ENCODE measurements at regions of chr20 and their contacts with region 1.

Region 1: DNA sequence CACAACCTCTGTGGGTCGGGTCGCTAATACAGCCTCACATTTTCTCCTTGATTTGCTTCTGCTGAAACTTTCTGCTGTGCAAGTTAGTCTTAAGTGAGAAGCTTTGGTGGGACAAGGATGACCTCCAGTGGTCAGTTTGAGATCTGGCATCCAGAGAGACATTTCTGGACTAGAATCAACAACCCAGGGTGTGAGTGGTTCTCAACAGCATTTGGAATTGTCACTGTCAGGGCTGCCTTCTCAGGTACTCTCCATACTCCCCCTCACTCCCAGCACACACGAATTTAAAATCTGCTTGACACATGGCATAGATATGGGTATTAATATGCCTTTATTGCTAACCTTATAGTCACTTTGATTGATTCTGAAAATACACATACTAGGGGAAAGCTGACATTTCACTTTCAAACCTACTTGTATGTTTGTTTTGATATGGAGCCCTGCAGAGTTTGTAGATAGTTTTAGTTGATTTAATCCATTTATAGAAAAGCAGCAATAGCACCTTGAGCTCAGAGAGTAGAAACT is 13.2 kb downstream of the OTOR start:
- DNase-seq: peak; percentile 43
- ATAC-seq: peak; percentile 91
- H3K4me3 Mint-ChIP-seq: no peak overlapping the region
- H3K27ac Mint-ChIP-seq: no peak overlapping the region
- H3K4me1 Mint-ChIP-seq: peaks cover 29% of the 10 kb centered on the region
- H3K27me3 Mint-ChIP-seq: peaks cover 6% of the 10 kb centered on the region; the same call in 1 of the 2 replicates
- CTCF ChIP-seq: peak; percentile 53; the same call in 1 of the 2 replicates

Region 2: GRCh38 chr20:16520154-16520553 is 241.2 kb before region 1 on chr20:
- CTCF ChIA-PET with region 1: interaction called, 11 read pairs
- POLR2A ChIA-PET with region 1: no interaction called
- DNase-seq: no peak
- ATAC-seq: no peak
- H3K4me3 Mint-ChIP-seq: no peak overlapping the region
- H3K27ac Mint-ChIP-seq: no peak overlapping the region
- H3K4me1 Mint-ChIP-seq: peaks cover 43% of the 10 kb centered on the region
- H3K27me3 Mint-ChIP-seq: no peaks in the 10 kb centered on the region
- CTCF ChIP-seq: no peak

Region 3: GRCh38 chr20:16671753-16672152 is 89.6 kb before region 1 on chr20:
- CTCF ChIA-PET with region 1: no interaction called
- POLR2A ChIA-PET with region 1: no interaction called
- DNase-seq: no peak
- ATAC-seq: no peak
- H3K4me3 Mint-ChIP-seq: no peak overlapping the region
- H3K27ac Mint-ChIP-seq: no peak overlapping the region
- H3K4me1 Mint-ChIP-seq: no peaks in the 10 kb centered on the region
- H3K27me3 Mint-ChIP-seq: no peaks in the 10 kb centered on the region
- CTCF ChIP-seq: no peak

Region 4: DNA sequence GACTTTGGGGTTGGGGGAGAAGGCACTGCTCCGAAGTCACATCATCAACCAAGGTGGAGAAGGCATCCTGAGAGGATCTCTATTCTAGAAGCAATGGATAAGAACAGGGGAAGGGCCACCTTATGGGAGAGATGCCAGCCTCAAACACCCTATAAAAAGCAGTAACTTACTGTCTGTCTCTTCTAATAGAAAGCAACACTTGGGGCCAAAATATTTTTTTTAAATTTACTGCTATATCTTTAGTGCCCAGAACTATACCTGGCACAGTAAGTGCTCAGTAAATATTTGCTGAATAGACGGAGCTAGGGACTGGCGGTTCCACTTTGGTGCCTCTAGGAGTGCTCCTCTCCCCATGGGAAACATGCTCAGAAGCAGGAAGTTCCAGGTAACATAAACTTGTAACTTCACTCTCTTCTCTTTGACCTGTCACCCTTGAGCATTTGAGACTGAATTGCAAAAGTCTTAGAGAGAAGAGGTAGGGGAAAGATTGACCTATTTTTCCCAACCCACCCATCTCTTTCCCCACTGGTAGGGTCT is 14.0 kb before region 1 on chr20:
- CTCF ChIA-PET with region 1: interaction called, 14 read pairs
- POLR2A ChIA-PET with region 1: interaction called, 3 read pairs
- DNase-seq: no peak
- ATAC-seq: peak; percentile 93
- H3K4me3 Mint-ChIP-seq: no peak overlapping the region
- H3K27ac Mint-ChIP-seq: no peak overlapping the region
- H3K4me1 Mint-ChIP-seq: peaks cover 21% of the 10 kb centered on the region
- H3K27me3 Mint-ChIP-seq: no peaks in the 10 kb centered on the region
- CTCF ChIP-seq: no peak

Measured in WTC11 (cell line).